CD8-positive, alpha-beta memory T cell (primary cell): ENCODE measurements at regions of chr11 and their contacts with region 1.

Region 1: GRCh38 chr11:62621567-62622470 is at the start of gene B3GAT3:
- DNase-seq: peak; percentile 95 to 98 (median 97)
- H3K4me3 ChIP-seq: peak within 1 kb of the TSS; percentile 94
- H3K4me3 Mint-ChIP-seq: peak within 1 kb of the TSS; percentile 90 to 96 (median 94)
- H3K27ac ChIP-seq: peak within 1 kb of the TSS; percentile 80
- H3K27ac Mint-ChIP-seq: peak within 1 kb of the TSS; percentile 89 to 100 (median 97)
- H3K4me1 ChIP-seq: peaks cover 16% of the 10 kb centered on the region
- H3K4me1 Mint-ChIP-seq: peaks cover 15 to 28% (median 26%) of the 10 kb centered on the region in 3 donors
- H3K27me3 ChIP-seq: no peaks in the 10 kb centered on the region
- H3K27me3 Mint-ChIP-seq: peaks cover 0 to 1% of the 10 kb centered on the region in 2 donors
- total RNA-seq, gene B3GAT3: 67.4 to 68.2 TPM

Region 2: GRCh38 chr11:62487738-62488551 is 133.9 kb before region 1 on chr11:
- CTCF ChIA-PET with region 1: no interaction called
- POLR2A ChIA-PET with region 1: no interaction called
- DNase-seq: no peak
- H3K4me3 ChIP-seq: no peak overlapping the region
- H3K4me3 Mint-ChIP-seq: no peak overlapping the region
- H3K27ac ChIP-seq: no peak overlapping the region
- H3K27ac Mint-ChIP-seq: peak overlapping the region in 1 of 8 donors; percentile 70
- H3K4me1 ChIP-seq: no peaks in the 10 kb centered on the region
- H3K4me1 Mint-ChIP-seq: peaks cover 0 to 7% (median 3%) of the 10 kb centered on the region in 3 donors
- H3K27me3 ChIP-seq: no peaks in the 10 kb centered on the region
- H3K27me3 Mint-ChIP-seq: peaks cover 0 to 4% of the 10 kb centered on the region in 2 donors

Region 3: DNA sequence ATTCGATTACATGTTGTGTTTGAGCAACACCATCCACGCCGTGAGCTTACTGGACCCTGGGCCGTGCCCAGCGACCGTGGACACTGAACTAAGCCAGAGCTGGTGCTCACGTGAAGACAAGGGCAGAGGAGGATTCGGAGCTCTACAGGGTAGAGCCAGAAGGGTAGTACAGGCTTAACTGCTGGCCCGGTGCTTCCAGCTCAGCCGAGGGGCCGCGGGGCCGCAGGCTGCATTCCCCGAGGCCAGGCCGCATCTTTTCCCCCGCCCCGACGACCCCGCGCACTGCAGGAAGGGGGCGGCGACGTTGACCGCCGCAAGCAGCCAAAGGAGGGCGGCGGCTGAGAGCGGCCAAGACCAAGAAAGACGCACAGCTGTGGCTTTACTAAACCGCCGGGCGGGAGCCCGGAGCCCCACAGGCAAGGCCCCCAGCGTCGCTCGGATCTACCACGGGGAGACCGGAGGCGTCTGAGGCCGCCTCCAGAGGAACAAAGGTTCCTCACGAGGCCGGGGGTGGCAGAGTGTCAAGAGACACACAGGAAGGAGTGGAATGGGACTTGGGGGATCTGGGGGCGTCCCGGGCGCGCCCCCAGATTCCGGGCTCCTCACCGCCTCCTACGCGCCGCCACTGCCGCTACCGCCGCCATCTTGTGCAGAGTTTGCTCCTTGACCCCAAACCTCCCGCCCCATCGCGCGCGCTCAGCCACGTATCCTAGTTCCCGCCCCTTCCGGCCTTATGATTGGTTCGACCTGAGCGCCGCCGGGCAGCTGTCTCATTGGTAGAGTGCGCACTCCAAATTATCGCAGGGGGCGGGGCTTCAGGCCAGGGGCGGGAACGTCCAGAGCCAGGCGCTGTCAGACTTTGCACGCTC is 24.4 kb after region 1 on chr11 and contains the start of gene GANAB:
- CTCF ChIA-PET with region 1: interaction called, 6 read pairs
- POLR2A ChIA-PET with region 1: interaction called, 17 read pairs
- DNase-seq: peak; percentile 96 to 99 (median 98)
- H3K4me3 ChIP-seq: peak within 1 kb of the TSS; percentile 75
- H3K4me3 Mint-ChIP-seq: peak within 1 kb of the TSS; percentile 89 to 97 (median 96)
- H3K27ac ChIP-seq: peak within 1 kb of the TSS; percentile 77
- H3K27ac Mint-ChIP-seq: peak within 1 kb of the TSS; percentile 88 to 99 (median 98)
- H3K4me1 ChIP-seq: peaks cover 24% of the 10 kb centered on the region
- H3K4me1 Mint-ChIP-seq: peaks cover 19 to 40% (median 25%) of the 10 kb centered on the region in 3 donors
- H3K27me3 ChIP-seq: no peaks in the 10 kb centered on the region
- H3K27me3 Mint-ChIP-seq: no peaks in the 10 kb centered on the region
- total RNA-seq, gene GANAB: 213 to 219 TPM